GM12878 (cell line): ENCODE measurements at regions of chr6 and their contacts with region 1.

Region 1: GRCh38 chr6:27687154-27688013 is 214.5 kb upstream of the ZNF184 start:
- DNase-seq: peak; percentile 67
- ATAC-seq: peak; percentile 90
- H3K4me3 ChIP-seq: peak overlapping the region; percentile 76
- H3K27ac ChIP-seq: peak overlapping the region; percentile 76
- H3K4me1 ChIP-seq: no peaks in the 10 kb centered on the region
- H3K27me3 ChIP-seq: no peaks in the 10 kb centered on the region
- CTCF ChIP-seq: peak; percentile 91 to 96 (median 93)
- EP300 ChIP-seq: no peak
- POLR2A ChIP-seq: peak; percentile 48; the same call in 1 of the 2 replicates
- RAD21 ChIP-seq: peak; percentile 80

Region 2: GRCh38 chr6:27188885-27189418 is 498.4 kb before region 1 on chr6:
- CTCF ChIA-PET with region 1: interaction called, 3 read pairs
- POLR2A ChIA-PET with region 1: no interaction called
- RAD21 ChIA-PET with region 1: interaction called, 4 read pairs
- SMC1A ChIA-PET with region 1: interaction called, 6 read pairs
- in situ Hi-C with region 1: no loop called
- intact Hi-C with region 1: loop called (anchors 5 kb)
- DNase-seq: peak; percentile 50
- ATAC-seq: peak; percentile 91
- H3K4me3 ChIP-seq: peak overlapping the region; percentile 75
- H3K27ac ChIP-seq: peak overlapping the region; percentile 78
- H3K4me1 ChIP-seq: no peaks in the 10 kb centered on the region
- H3K27me3 ChIP-seq: no peaks in the 10 kb centered on the region
- CTCF ChIP-seq: peak; percentile 49 to 71 (median 59); a peak in 5 of 6 replicates
- EP300 ChIP-seq: no peak
- POLR2A ChIP-seq: no peak
- RAD21 ChIP-seq: peak; percentile 90

Region 3: GRCh38 chr6:27503436-27504030 is 183.9 kb before region 1 on chr6:
- CTCF ChIA-PET with region 1: interaction called, 4 read pairs
- POLR2A ChIA-PET with region 1: no interaction called
- RAD21 ChIA-PET with region 1: no interaction called
- SMC1A ChIA-PET with region 1: no interaction called
- in situ Hi-C with region 1: no loop called
- intact Hi-C with region 1: loop called (anchors 1 kb)
- DNase-seq: peak; percentile 73
- ATAC-seq: peak; percentile 70
- H3K4me3 ChIP-seq: peak overlapping the region; percentile 78
- H3K27ac ChIP-seq: peak overlapping the region; percentile 58
- H3K4me1 ChIP-seq: no peaks in the 10 kb centered on the region
- H3K27me3 ChIP-seq: no peaks in the 10 kb centered on the region; a peak in 1 of 4 replicates
- CTCF ChIP-seq: no peak
- EP300 ChIP-seq: no peak
- POLR2A ChIP-seq: no peak
- RAD21 ChIP-seq: no peak

Region 4: DNA sequence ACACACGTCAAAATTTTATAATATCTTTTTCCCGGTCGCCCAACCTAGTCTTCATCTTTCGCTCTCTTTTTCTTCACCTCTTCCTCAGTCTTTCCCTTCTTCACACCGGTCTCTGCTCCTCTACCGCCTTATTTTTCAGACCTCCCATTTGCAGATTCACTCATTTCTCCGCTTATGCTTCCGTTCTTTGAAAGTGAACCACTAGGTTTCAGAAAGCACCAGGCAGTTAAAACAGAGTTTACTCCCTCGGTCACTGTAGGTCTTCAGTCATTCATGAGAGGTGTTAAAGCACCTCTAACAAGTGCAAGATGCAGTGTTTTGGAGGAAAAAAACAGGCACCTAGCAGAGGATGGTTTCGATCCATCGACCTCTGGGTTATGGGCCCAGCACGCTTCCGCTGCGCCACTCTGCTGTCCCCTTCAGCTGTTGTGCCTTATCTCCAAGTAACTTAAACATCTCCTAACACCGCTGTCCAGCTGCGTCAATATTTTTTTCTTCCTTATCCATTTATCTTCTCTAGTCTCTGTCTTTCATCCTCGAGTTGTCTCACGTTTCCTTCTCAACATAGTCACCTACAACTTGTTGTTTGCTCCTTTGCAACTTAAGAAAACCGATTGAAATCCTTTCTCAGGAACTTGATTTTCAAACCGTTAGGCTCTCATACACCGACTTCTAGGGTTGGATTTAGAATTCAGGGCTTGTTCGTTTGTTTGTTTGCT is 94.7 kb before region 1 on chr6:
- CTCF ChIA-PET with region 1: no interaction called
- POLR2A ChIA-PET with region 1: no interaction called
- RAD21 ChIA-PET with region 1: no interaction called
- SMC1A ChIA-PET with region 1: interaction called, 3 read pairs
- in situ Hi-C with region 1: no loop called
- intact Hi-C with region 1: loop called (anchors 2 kb)
- DNase-seq: peak; percentile 89
- ATAC-seq: peak; percentile 94
- H3K4me3 ChIP-seq: peak overlapping the region; percentile 81
- H3K27ac ChIP-seq: peak overlapping the region; percentile 9; the same call in 1 of the 2 replicates
- H3K4me1 ChIP-seq: peaks cover 11% of the 10 kb centered on the region
- H3K27me3 ChIP-seq: no peaks in the 10 kb centered on the region
- CTCF ChIP-seq: no peak
- EP300 ChIP-seq: peak in 1 of 2 experiments; percentile 84; a peak in 1 of 4 replicates
- POLR2A ChIP-seq: no peak
- RAD21 ChIP-seq: no peak

Region 5: GRCh38 chr6:27672113-27672799 is 15.1 kb before region 1 on chr6:
- CTCF ChIA-PET with region 1: interaction called, 10 read pairs
- POLR2A ChIA-PET with region 1: interaction called, 5 read pairs
- RAD21 ChIA-PET with region 1: interaction called, 3 read pairs
- SMC1A ChIA-PET with region 1: interaction called, 11 read pairs
- in situ Hi-C with region 1: no loop called
- intact Hi-C with region 1: loop called (anchors 2 kb)
- DNase-seq: no peak
- ATAC-seq: peak; percentile 67
- H3K4me3 ChIP-seq: peak overlapping the region; percentile 38; the same call in 1 of the 2 replicates
- H3K27ac ChIP-seq: peak overlapping the region; percentile 90
- H3K4me1 ChIP-seq: peaks cover 9% of the 10 kb centered on the region
- H3K27me3 ChIP-seq: no peaks in the 10 kb centered on the region
- CTCF ChIP-seq: no peak
- EP300 ChIP-seq: no peak; a peak in 1 of 4 replicates
- POLR2A ChIP-seq: no peak; the same call in 1 of the 2 replicates
- RAD21 ChIP-seq: no peak